Psoas muscle (tissue), 8 donors: ENCODE measurements at regions of chr5 and their contacts with region 1.

Region 1: DNA sequence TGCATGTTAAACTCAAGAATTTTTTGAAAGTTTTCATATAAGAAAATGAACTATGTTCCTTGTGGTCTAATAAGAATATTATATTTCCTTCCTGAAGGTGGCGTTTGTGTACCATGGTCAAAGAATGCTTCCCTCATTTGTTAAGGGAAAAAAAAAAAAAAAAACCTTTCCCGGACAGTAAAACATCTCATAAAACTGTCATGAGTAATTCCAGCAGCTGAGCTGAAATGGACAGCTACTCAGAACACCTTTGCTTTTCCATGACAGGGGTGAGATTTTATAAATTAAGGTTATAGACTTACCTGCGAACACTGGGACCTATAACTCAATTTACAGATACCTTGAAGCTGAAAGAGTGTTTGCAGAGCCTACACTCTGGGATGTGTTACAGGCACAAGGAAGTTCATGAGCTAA is 113.2 kb upstream of the RANBP3L start:
- DNase-seq: no peak
- ATAC-seq: peak; percentile 57 to 88 (median 72)
- H3K4me3 ChIP-seq: no peak overlapping the region
- H3K27ac ChIP-seq: no peak overlapping the region
- H3K4me1 ChIP-seq: peaks cover 5% of the 10 kb centered on the region
- H3K27me3 ChIP-seq: no peaks in the 10 kb centered on the region
- CTCF ChIP-seq: peak; percentile 59

Region 2: GRCh38 chr5:36108758-36109460 is 306.0 kb before region 1 on chr5:
- intact Hi-C with region 1: no loop called
- DNase-seq: no peak
- ATAC-seq: no peak
- H3K4me3 ChIP-seq: no peak overlapping the region
- H3K27ac ChIP-seq: no peak overlapping the region
- H3K4me1 ChIP-seq: no peaks in the 10 kb centered on the region
- H3K27me3 ChIP-seq: no peaks in the 10 kb centered on the region
- CTCF ChIP-seq: no peak

Region 3: DNA sequence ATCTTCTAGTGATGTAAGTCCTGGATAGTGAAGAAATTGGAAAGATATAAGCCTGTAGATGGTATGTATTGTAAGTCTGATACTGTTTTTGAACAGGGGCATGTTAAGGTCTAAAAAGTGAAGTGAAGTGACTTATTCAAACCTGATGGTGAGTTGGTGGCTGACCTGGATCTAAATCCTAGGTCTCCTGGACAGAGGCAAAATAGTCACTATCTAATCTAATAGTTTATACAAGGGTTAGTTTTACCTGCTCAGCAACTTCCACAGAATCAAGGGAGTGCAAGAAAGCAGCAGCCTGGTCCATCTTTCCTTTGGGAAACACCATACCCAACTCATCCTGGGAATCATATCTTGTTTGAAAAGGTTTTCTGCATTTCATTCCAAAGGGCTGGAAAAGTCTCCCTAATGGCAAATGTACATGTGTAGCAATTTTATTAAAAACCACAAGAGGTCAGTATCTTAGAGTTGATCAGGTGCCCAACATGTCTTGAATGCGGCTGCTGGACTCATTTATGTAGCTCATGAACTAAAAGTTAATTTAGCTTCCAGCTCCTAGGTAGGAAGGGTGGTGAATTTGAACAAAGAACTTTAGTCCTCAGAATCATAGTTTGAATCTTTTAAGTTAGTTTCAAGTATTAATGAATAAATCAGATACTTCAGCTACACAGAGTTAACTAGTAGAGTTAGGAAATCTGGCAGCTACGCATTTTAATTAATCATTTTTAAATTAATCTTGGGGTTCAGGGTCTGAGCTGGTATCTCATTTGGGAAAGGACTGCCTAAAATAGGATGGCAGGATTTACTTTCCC is 237.0 kb before region 1 on chr5:
- intact Hi-C with region 1: no loop called
- DNase-seq: no peak
- ATAC-seq: peak in 2 of 4 donors; percentile 50 to 79
- H3K4me3 ChIP-seq: no peak overlapping the region
- H3K27ac ChIP-seq: no peak overlapping the region
- H3K4me1 ChIP-seq: no peaks in the 10 kb centered on the region
- H3K27me3 ChIP-seq: no peaks in the 10 kb centered on the region
- CTCF ChIP-seq: peak; percentile 53

Region 4: DNA sequence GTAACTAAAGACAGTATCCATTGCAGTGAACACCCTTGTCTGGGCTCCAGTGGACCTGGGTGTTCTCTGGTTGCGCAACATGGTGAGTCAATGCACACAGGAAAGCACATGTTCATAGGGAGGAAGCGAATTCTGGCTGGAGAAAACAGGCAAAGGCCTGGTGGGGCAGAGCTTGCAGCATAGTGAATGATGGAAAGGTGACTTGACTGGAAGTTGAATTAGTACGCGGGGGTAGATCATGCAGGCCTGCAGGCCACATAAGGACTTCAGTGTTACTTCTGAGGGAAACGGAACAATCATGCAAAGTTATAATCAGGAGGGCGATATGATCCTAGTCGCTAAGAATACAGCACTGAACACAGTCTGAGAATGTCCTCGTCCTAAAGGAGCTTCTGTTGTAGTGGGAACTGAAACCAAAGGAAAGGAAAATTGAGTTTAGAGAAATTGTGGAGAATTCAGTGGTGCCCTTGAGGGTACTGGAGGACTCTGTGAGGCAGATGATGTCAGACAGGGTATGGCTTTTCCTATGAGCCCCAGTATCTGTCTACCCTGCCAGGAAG is 41.3 kb before region 1 on chr5:
- intact Hi-C with region 1: no loop called
- DNase-seq: peak; percentile 69 to 72
- ATAC-seq: peak; percentile 42 to 84 (median 77)
- H3K4me3 ChIP-seq: no peak overlapping the region
- H3K27ac ChIP-seq: peak overlapping the region; percentile 12
- H3K4me1 ChIP-seq: no peaks in the 10 kb centered on the region
- H3K27me3 ChIP-seq: no peaks in the 10 kb centered on the region
- CTCF ChIP-seq: no peak

Region 5: DNA sequence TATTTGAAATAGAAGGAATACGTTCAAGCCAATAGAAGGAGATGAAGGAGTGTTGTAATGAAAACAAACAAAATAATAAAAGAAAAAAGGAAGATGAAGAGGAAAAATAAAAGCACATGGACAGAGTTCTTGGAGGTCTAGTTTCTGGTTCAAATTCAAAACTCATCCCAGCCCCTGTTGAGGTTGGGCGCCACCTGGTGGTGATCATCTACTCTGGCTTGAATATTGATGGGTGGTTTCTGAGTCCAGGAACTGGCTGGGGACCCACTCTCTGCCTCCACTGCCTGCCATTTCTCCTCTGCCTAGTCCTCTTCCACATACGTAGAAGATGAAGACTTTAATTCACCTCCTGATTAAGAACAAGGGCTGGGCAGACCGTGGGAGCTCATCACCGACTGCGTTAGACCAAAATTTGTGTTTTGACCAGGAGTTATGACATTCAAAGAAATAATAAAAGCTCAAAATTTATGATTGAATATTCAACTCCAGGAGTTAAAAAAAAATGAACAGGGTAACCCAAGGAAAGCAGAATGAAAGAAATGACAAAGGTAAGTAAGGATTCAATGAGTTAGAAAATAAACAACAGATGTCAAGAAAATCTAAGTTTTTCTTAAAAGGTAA is 92.6 kb after region 1 on chr5:
- intact Hi-C with region 1: loop called in 1 of 2 experiments (anchors 2 kb)
- DNase-seq: peak; percentile 79 to 85
- ATAC-seq: peak; percentile 57 to 74 (median 64)
- H3K4me3 ChIP-seq: no peak overlapping the region
- H3K27ac ChIP-seq: no peak overlapping the region
- H3K4me1 ChIP-seq: no peaks in the 10 kb centered on the region
- H3K27me3 ChIP-seq: no peaks in the 10 kb centered on the region
- CTCF ChIP-seq: peak; percentile 84

Region 6: GRCh38 chr5:36606428-36607113 is 191.7 kb after region 1 on chr5 and contains the start of gene SLC1A3:
- intact Hi-C with region 1: loop called in 1 of 2 experiments (anchors 10 kb)
- DNase-seq: peak; percentile 34 to 69
- ATAC-seq: peak; percentile 88 to 92 (median 90)
- H3K4me3 ChIP-seq: peak within 1 kb of the TSS; percentile 81
- H3K27ac ChIP-seq: peak within 1 kb of the TSS; percentile 88
- H3K4me1 ChIP-seq: peaks cover 13% of the 10 kb centered on the region
- H3K27me3 ChIP-seq: no peaks in the 10 kb centered on the region
- CTCF ChIP-seq: no peak
- total RNA-seq, gene SLC1A3: 12.7 to 25.3 (median 21.5) TPM

Region 7: GRCh38 chr5:36695677-36696673 is 281.1 kb after region 1 on chr5:
- intact Hi-C with region 1: loop called (anchors 1 to 2 kb)
- DNase-seq: peak; percentile 32 to 66
- ATAC-seq: peak; percentile 55 to 70 (median 64)
- H3K4me3 ChIP-seq: no peak overlapping the region
- H3K27ac ChIP-seq: no peak overlapping the region
- H3K4me1 ChIP-seq: no peaks in the 10 kb centered on the region
- H3K27me3 ChIP-seq: no peaks in the 10 kb centered on the region
- CTCF ChIP-seq: peak; percentile 58